Gastrocnemius medialis (tissue), 4 donors: ENCODE measurements at regions of chr6 and their contacts with region 1.

Region 1: DNA sequence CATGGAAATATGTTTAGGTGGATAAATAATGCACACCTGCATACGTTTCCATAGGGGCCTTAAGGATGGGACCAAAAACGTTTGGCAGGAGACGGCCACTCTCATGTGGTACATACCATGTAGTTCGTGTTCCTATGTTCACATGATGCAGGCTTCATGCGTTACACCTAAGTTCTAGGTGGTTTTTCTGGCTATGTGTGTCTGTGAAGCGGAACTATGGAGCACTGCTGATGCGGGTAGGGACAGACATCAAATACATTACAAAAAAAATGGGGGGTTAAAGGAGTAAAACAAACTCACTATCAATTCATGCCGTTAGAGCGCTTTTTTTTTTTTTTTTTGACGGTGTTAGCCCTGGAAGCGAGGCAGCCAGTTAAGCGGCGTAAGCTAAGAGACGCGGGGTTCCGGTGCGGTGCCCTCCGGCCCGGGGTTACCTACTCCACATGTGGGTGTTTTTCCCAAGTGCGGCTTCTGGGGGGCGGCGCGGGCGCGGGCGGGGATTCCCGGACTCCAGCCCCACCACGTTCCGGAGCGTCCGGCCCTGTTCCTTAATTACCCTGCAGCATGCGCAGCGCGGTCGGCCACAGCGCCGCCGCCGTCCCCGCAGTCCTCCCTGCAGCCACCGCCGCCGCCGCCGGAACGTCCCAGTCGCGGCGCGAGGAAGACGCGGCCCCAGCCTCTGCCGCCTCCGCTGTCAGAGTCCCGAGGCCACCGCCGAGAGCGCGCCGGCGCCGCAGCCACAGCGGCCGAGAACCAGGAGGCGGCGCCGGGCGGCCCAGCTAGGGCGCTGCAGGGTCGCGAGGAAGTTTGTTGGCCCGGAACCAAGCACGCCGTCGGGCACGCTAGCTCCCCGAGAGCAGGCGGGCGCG is 648 bp downstream of the COL19A1 start:
- DNase-seq: peak in 1 of 2 donors; percentile 21
- ATAC-seq: peak; percentile 73 to 83
- H3K4me3 ChIP-seq: peak overlapping the region; percentile 54 to 69 (median 64)
- H3K27ac ChIP-seq: no peak overlapping the region
- H3K4me1 ChIP-seq: peaks cover 5 to 12% of the 10 kb centered on the region in 2 donors
- H3K27me3 ChIP-seq: no peaks in the 10 kb centered on the region
- CTCF ChIP-seq: peak in 1 of 5 experiments; percentile 27
- POLR2A ChIP-seq: no peak

Region 2: DNA sequence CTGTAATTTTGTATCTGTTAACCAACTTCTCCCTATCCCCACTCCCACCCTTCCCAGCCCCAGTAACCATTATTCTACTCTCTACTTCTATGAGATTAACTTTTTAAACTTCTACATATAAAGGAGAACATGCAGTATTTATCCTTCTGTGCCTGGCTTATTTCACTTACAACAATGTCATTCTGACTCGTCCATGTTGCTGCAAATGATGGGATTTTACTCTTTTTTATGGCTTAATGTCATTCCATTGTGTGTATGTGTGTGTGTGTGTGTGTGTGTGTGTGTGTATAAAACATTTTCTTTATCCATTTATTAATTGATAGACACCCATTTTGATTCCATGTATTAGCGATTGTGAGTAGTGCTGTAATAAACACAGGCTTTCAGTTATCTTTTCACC is 75.5 kb after region 1 on chr6:
- in situ Hi-C with region 1: no loop called
- intact Hi-C with region 1: no loop called
- DNase-seq: no peak
- ATAC-seq: no peak
- H3K4me3 ChIP-seq: no peak overlapping the region
- H3K27ac ChIP-seq: no peak overlapping the region
- H3K4me1 ChIP-seq: no peaks in the 10 kb centered on the region
- H3K27me3 ChIP-seq: no peaks in the 10 kb centered on the region
- CTCF ChIP-seq: no peak
- POLR2A ChIP-seq: no peak

Region 3: DNA sequence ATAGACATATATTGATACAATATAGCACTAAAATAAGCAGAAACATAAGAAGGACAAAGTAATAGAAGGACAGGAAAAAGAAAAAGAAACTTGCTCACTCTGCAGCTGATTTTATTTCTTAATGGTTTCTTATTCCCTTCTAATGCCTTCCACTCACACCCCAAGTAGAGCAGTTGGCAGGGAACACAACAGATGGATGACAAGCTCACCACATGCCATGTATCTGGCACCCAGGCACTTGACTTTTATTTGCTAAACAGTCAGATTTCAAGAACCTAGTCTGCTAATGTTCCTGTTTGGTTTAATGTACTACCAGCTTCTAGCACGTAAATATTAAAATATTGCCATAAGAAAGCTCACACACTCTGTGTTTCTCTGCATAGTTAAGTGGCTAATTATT is 86.5 kb after region 1 on chr6:
- in situ Hi-C with region 1: no loop called
- intact Hi-C with region 1: loop called (anchors 5 kb)
- DNase-seq: no peak
- ATAC-seq: peak in 1 of 2 donors; percentile 53
- H3K4me3 ChIP-seq: no peak overlapping the region
- H3K27ac ChIP-seq: no peak overlapping the region
- H3K4me1 ChIP-seq: peaks cover 18 to 22% of the 10 kb centered on the region in 2 donors
- H3K27me3 ChIP-seq: no peaks in the 10 kb centered on the region
- CTCF ChIP-seq: no peak
- POLR2A ChIP-seq: no peak